Activated naive CD4-positive, alpha-beta T cell treated with anti-CD3 and anti-CD28 coated beads for 36 hours (primary cell): ENCODE measurements at regions of chr15 and their contacts with region 1.

Region 1: DNA sequence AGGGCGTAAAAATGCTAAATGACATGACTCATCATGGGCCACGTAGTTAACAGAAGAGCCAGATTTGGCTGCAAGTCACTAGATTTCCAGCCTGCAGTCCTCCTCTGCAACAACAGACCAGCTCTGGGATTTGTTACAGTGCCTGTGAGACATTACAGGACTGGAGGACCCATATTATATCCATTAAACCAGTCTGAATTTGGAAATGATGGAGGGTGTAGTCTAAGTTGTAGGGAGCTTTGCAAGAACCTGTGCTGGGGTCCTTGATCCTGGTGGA is 10.8 kb downstream of the ZNF774 start:
- DNase-seq: no peak
- H3K4me3 Mint-ChIP-seq: no peak overlapping the region
- H3K27ac Mint-ChIP-seq: no peak overlapping the region
- H3K4me1 Mint-ChIP-seq: peaks cover 21% of the 10 kb centered on the region
- H3K27me3 Mint-ChIP-seq: no peaks in the 10 kb centered on the region

Region 2: DNA sequence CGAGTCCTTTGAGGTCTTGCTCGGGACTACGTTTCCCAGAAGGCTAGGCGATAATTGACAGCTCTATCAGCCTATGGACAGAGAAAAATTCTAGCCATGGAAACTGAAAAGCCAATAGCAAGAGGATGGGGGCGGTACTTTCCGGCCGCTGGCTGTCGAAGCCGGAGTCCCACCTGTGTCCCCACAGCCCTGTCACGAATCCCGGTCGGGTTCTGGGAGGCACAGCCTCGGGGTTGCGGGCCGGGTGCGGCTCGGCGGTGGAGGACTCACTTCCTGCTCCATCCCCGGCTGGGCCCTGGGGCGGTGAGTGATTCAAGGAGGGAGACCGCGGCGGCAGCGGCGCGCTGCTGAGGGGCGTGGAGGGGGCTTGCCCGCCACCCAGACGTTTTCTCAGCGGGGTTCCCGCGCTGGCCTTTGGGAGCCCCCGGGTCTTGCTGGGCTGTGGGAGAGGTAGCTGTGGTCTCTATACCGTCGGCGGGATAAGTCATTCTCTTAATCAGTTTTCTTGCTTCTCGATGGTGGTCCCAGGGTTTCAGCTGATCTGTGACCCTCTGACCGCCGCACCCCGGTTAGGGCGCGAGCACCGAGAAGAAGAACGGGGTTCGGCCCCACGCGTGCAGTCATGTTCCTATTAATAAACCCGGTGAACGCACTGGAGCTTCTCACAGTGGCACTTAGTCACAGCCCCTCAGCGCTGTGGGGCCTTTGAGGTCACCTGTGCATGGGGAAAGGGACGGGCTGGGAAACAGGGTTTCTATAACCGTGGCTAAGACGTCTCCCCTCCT is 10.6 kb before region 1 on chr15 and contains the start of gene ZNF774:
- CTCF ChIA-PET with region 1: interaction called, 10 read pairs
- intact Hi-C with region 1: no loop called
- DNase-seq: peak; percentile 94
- H3K4me3 Mint-ChIP-seq: peak within 1 kb of the TSS; percentile 88
- H3K27ac Mint-ChIP-seq: peak within 1 kb of the TSS; percentile 53
- H3K4me1 Mint-ChIP-seq: peaks cover 2% of the 10 kb centered on the region
- H3K27me3 Mint-ChIP-seq: no peaks in the 10 kb centered on the region
- total RNA-seq, gene ZNF774: 0.84 to 0.95 TPM

Region 3: GRCh38 chr15:90419738-90420406 is 57.0 kb after region 1 on chr15:
- CTCF ChIA-PET with region 1: interaction called, 6 read pairs
- intact Hi-C with region 1: loop called (anchors 2 kb)
- DNase-seq: peak; percentile 73
- H3K4me3 Mint-ChIP-seq: peak overlapping the region; percentile 33
- H3K27ac Mint-ChIP-seq: peak overlapping the region; percentile 87
- H3K4me1 Mint-ChIP-seq: peaks cover 77% of the 10 kb centered on the region
- H3K27me3 Mint-ChIP-seq: no peaks in the 10 kb centered on the region

Region 4: GRCh38 chr15:90465140-90465922 is 102.5 kb after region 1 on chr15:
- CTCF ChIA-PET with region 1: interaction called, 3 read pairs
- intact Hi-C with region 1: loop called (anchors 5 kb)
- DNase-seq: peak; percentile 11
- H3K4me3 Mint-ChIP-seq: no peak overlapping the region
- H3K27ac Mint-ChIP-seq: peak overlapping the region; percentile 32
- H3K4me1 Mint-ChIP-seq: peaks cover 3% of the 10 kb centered on the region
- H3K27me3 Mint-ChIP-seq: no peaks in the 10 kb centered on the region

Region 5: GRCh38 chr15:90482124-90483011 is 119.5 kb after region 1 on chr15:
- CTCF ChIA-PET with region 1: interaction called, 95 read pairs
- intact Hi-C with region 1: loop called (anchors 1 kb)
- DNase-seq: peak; percentile 74
- H3K4me3 Mint-ChIP-seq: no peak overlapping the region
- H3K27ac Mint-ChIP-seq: no peak overlapping the region
- H3K4me1 Mint-ChIP-seq: peaks cover 16% of the 10 kb centered on the region
- H3K27me3 Mint-ChIP-seq: no peaks in the 10 kb centered on the region

Region 6: GRCh38 chr15:90603893-90604292 is 241.0 kb after region 1 on chr15:
- CTCF ChIA-PET with region 1: interaction called, 5 read pairs
- intact Hi-C with region 1: loop called (anchors 2 kb)
- DNase-seq: peak; percentile 82
- H3K4me3 Mint-ChIP-seq: no peak overlapping the region
- H3K27ac Mint-ChIP-seq: no peak overlapping the region
- H3K4me1 Mint-ChIP-seq: peaks cover 42% of the 10 kb centered on the region
- H3K27me3 Mint-ChIP-seq: no peaks in the 10 kb centered on the region